ENCODE measurements at regions of chr6 and their contacts with region 1.

Region 1: GRCh38 chr6:155530219-155530834 is 74.7 kb upstream of the NOX3 start:
- DNase-seq: no peak
- H3K4me3 ChIP-seq: no peak overlapping the region
- CTCF ChIP-seq: peak; percentile 58

Region 2: GRCh38 chr6:155327326-155328073 is 202.8 kb before region 1 on chr6:
- CTCF ChIA-PET with region 1: interaction called, 20 read pairs
- POLR2A ChIA-PET with region 1: no interaction called
- DNase-seq: peak; percentile 36
- H3K4me3 ChIP-seq: no peak overlapping the region
- CTCF ChIP-seq: peak; percentile 61

Region 3: GRCh38 chr6:155333414-155333813 is 196.9 kb before region 1 on chr6:
- CTCF ChIA-PET with region 1: interaction called, 20 read pairs
- POLR2A ChIA-PET with region 1: no interaction called
- DNase-seq: no peak
- H3K4me3 ChIP-seq: no peak overlapping the region
- CTCF ChIP-seq: no peak

Region 4: GRCh38 chr6:155340464-155341129 is 189.7 kb before region 1 on chr6:
- CTCF ChIA-PET with region 1: interaction called, 20 read pairs
- POLR2A ChIA-PET with region 1: no interaction called
- DNase-seq: no peak
- H3K4me3 ChIP-seq: no peak overlapping the region
- CTCF ChIP-seq: peak; percentile 66

Region 5: GRCh38 chr6:155389130-155389529 is 141.2 kb before region 1 on chr6:
- CTCF ChIA-PET with region 1: no interaction called
- POLR2A ChIA-PET with region 1: no interaction called
- DNase-seq: no peak
- H3K4me3 ChIP-seq: no peak overlapping the region
- CTCF ChIP-seq: no peak